Endothelial cell of umbilical vein (primary cell): ENCODE measurements at regions of chr2 and their contacts with region 1.

Region 1: DNA sequence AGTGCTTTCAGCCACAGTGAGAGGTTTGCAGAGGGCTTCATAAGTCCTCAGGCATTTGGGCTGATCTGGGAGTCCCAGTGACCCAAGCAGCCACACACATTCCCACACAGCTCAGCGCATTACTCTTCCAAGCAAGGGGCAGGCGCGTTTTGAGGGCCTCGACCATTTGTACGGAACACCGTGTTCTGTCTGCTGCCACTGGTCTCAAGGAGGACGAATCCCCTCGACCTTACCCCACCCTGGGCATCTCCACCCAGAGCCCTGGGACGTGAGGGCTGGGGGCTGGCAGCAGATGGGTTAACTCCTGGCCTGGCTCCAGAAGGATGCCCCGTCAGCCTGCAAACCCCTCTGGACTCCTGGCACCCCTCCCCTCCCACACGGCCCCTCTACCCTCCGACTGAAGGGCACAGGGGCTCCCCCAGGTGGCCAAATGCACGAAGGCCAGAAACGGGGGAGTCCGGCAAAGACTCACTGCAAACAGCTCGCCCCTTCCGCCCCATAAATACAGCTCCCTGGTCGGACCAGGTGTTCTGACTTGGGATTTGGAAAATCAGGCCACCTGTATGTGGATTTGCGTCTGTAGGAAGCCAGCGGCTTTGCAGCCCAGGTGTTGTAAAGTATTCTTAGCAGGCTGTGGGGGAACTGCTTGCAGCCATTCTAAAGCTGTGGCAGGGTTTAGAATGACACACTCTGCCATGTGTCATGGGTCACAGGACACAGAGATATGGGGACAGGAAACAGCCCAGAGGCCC is 33.6 kb upstream of the PTMA start:
- DNase-seq: peak; percentile 52
- H3K4me3 ChIP-seq: no peak overlapping the region
- H3K27ac ChIP-seq: no peak overlapping the region
- H3K4me1 ChIP-seq: peaks cover 9% of the 10 kb centered on the region
- H3K27me3 ChIP-seq: no peaks in the 10 kb centered on the region
- CTCF ChIP-seq: peak; percentile 76 to 89
- POLR2A ChIP-seq: no peak

Region 2: GRCh38 chr2:231563378-231563961 is 111.3 kb before region 1 on chr2:
- CTCF ChIA-PET with region 1: interaction called, 9 read pairs
- POLR2A ChIA-PET with region 1: no interaction called
- dilution Hi-C with region 1: no loop called
- intact Hi-C with region 1: loop called (anchors 2 kb)
- DNase-seq: peak; percentile 60
- H3K4me3 ChIP-seq: no peak overlapping the region
- H3K27ac ChIP-seq: no peak overlapping the region
- H3K4me1 ChIP-seq: no peaks in the 10 kb centered on the region
- H3K27me3 ChIP-seq: no peaks in the 10 kb centered on the region
- CTCF ChIP-seq: peak; percentile 39 to 79
- POLR2A ChIP-seq: no peak

Region 3: DNA sequence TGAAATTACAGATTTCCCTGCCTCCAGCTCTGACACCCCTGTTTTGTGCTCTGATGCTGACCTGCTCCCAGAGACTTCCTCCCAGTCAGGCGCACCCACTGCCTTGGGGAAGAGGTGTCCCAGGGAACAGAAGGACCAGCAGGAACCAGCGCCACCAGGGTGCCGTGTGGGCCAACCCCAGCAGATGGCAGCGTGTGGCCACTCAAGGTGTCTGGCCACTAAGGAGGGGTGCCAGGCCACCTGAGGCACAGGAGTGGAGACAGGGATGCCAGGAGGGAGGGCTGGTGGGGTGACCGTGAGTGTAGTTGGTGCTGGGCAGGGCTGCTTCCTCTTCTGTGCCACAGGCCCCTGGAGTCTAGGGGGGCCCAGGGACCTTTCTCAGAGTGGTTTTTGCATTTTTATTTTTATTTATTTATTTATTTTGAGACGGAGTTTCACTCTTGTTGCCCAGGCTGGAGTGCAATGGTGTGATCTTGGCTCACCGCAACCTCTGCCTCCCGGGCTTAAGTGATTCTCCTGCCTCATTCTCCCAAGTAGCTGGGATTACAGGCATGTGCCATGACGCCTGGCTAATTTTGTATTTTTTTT is 26.1 kb before region 1 on chr2:
- CTCF ChIA-PET with region 1: interaction called, 93 read pairs
- POLR2A ChIA-PET with region 1: no interaction called
- dilution Hi-C with region 1: no loop called
- intact Hi-C with region 1: loop called (anchors 1 kb)
- DNase-seq: peak; percentile 65
- H3K4me3 ChIP-seq: no peak overlapping the region
- H3K27ac ChIP-seq: no peak overlapping the region
- H3K4me1 ChIP-seq: peaks cover under 1% of the 10 kb centered on the region
- H3K27me3 ChIP-seq: no peaks in the 10 kb centered on the region
- CTCF ChIP-seq: peak; percentile 72 to 85
- POLR2A ChIP-seq: no peak

Region 4: GRCh38 chr2:231687133-231687852 is 12.5 kb after region 1 on chr2:
- CTCF ChIA-PET with region 1: interaction called, 33 read pairs
- POLR2A ChIA-PET with region 1: interaction called, 3 read pairs
- dilution Hi-C with region 1: no loop called
- intact Hi-C with region 1: no loop called
- DNase-seq: peak; percentile 54
- H3K4me3 ChIP-seq: no peak overlapping the region
- H3K27ac ChIP-seq: no peak overlapping the region
- H3K4me1 ChIP-seq: no peaks in the 10 kb centered on the region
- H3K27me3 ChIP-seq: no peaks in the 10 kb centered on the region
- CTCF ChIP-seq: peak; percentile 60 to 82
- POLR2A ChIP-seq: no peak

Region 5: DNA sequence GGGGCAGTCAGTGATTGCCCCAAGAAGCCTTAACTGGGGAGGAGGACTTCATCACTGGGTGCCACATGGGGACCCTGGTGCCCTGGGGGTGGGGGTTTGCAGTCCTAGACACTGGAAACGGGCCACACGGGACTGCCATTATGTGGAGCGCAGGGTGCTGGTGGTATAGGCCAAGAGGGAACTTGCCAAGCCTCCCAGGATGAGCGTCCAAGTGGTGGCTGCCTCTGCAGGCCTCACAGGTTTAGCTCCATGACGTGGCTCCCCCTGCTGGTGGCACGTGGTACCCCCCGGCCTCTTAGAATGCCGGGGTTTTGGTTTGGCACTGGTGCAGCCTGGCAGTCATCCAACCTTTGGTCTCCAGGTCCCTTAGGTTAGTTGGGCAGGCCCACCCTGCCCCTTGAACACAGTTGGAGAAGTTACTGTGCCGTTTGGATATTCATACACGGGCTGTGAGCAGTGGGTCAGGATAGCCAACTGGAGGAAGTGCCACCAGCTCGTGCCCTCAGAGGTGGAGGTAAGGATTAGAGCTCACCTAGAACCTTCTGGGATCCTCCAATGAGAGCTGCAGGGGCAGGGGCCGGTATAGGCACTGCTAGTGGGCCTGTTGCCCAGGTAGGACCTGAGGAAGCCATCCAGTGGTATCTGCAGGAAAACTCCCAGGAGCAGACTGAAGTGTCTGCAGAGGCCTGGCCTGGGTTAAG is 39.1 kb after region 1 on chr2:
- CTCF ChIA-PET with region 1: interaction called, 583 read pairs
- POLR2A ChIA-PET with region 1: interaction called, 8 read pairs
- dilution Hi-C with region 1: no loop called
- intact Hi-C with region 1: loop called (anchors 1 kb)
- DNase-seq: peak; percentile 83
- H3K4me3 ChIP-seq: no peak overlapping the region
- H3K27ac ChIP-seq: peak overlapping the region; percentile 10
- H3K4me1 ChIP-seq: peaks cover 27% of the 10 kb centered on the region
- H3K27me3 ChIP-seq: no peaks in the 10 kb centered on the region
- CTCF ChIP-seq: peak; percentile 91 to 94
- POLR2A ChIP-seq: no peak

Region 6: DNA sequence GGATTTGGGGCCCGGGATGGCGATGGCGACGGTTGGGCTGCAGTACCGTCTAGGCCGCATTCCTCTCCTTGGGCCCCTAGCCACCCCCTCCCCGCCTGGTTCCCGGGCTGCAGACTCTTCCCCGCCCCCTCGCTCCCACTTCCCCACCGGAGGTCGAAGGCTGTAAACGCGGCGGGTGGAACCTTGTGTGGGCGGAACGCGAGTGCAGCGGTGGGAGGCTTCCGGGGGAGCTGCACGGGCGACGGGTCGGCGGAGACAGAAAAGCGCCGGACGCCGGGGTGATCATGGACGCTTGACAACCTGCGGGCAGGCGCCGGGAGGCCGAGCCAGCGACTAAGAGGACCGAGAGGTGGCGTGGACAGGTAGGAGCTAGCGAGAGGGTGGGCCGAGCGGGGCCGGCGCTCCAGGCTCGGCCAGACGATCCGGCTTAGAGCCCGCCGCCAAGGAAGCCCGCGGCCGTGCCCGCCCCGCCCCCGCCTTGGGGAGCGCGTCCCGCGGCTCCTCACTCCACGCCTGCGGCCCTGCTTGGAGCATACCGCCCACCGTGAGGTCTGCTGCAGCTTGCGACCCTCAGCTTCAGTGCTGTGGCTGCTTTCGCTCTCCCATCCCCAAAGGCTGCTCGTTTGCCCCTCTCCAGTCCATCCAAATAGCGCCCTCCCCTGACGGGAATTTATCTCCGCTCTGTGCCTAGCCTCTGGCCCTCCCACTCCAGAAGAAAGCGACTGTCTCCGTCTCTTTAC is 111.6 kb after region 1 on chr2 and contains the start of gene COPS7B:
- CTCF ChIA-PET with region 1: interaction called, 10 read pairs
- POLR2A ChIA-PET with region 1: no interaction called
- dilution Hi-C with region 1: no loop called
- intact Hi-C with region 1: loop called (anchors 2 kb)
- DNase-seq: peak; percentile 85
- H3K4me3 ChIP-seq: peak within 1 kb of the TSS; percentile 46 to 84 (median 64)
- H3K27ac ChIP-seq: peak within 1 kb of the TSS; percentile 53
- H3K4me1 ChIP-seq: peaks cover 27% of the 10 kb centered on the region
- H3K27me3 ChIP-seq: no peaks in the 10 kb centered on the region
- CTCF ChIP-seq: peak; percentile 34 to 42
- POLR2A ChIP-seq: peak; percentile 69
- total RNA-seq, gene COPS7B: 42.4 and 50.3 TPM in 2 replicates